ENCODE measurements at regions of chr1 and their contacts with region 1.

Region 1: DNA sequence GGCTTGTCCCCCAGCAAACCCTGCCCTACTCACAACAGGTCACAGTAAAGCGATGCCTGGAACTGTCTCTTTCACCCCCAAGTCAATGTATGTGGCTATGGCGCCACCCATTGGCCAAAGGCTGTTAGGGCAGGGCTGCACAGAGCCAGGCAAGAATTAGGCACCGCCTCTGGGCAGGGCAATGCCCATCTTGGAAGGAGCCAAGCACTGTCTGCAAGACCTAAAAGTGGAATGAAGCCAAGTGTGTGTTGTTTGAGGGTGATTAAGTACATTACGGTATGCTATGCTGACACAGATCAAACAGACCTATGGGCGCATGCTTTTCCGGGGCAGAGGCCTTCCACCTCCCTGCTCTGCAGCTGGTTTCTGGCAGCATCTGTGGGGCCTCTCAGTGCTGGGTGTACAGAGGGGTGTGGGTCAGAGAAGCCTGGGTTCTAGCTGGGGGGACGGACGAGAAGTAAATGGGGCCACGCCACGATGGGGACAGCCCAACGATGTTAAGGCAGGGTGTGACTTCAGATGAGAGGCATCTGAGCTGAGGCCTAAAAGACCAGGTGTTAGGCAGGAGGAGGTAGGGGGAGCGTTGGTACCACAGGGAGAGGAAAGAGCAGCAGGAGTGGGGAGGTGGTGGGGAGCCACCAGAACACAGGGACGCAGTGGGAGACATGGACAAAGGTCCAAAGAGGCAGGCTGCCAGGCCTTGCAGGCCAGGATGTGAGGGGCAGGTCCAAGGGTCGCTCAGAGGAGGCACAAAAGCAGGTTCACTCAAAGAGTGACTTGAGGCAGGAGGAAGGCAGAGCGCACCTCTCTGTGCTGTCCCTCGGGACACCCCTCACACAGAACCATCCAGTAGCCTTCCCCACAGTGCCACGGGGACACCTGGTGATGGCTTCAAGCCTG is 49.8 kb downstream of the ACOT7 start:
- DNase-seq: peak; percentile 28 to 81 (median 64)

Region 2: DNA sequence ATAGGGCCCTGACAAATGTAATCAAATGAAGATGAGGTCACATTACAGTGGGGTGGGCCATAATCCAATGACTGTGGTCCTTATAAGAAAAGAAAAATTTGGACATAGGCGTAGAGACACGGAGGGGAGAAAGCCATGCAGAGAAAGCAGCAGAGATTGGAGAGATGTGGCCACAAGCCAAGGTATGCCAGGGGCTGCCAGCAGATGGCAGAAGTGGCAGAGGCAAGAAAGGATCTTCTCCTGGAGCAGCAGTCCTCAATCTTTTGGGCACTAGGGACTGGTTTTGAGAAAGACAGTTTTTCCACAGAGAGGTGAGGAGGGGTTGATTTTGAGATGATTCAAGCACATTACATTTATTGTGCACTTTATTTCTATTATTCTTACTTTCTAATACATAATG is 706.6 kb before region 1 on chr1:
- intact Hi-C with region 1: no loop called
- DNase-seq: peak in 31 of 42 donors; percentile 17 to 80 (median 47)

Region 3: GRCh38 chr1:6280761-6281451 is 62.9 kb before region 1 on chr1:
- intact Hi-C with region 1: no loop called
- DNase-seq: no peak

Region 4: DNA sequence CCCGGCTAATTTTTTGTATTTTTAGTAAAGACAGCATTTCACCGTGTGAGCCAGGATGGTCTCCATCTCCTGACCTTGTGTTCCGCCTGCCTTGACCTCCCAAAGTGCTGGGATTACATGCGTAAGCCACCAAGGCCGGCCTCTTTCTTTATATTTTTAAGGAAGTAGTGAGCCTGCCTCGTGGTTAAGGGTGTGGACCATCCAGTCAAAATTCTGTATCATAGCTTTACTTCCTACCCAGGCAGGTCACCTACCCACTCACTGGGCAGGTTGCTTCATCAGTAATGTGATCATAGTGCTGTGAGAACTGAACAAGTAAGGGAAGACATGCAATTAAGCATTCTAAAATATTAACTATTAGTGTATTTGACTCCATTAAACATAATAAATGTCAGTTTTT is 57.9 kb after region 1 on chr1:
- intact Hi-C with region 1: loop called (anchors 10 kb)
- DNase-seq: no peak

Region 5: DNA sequence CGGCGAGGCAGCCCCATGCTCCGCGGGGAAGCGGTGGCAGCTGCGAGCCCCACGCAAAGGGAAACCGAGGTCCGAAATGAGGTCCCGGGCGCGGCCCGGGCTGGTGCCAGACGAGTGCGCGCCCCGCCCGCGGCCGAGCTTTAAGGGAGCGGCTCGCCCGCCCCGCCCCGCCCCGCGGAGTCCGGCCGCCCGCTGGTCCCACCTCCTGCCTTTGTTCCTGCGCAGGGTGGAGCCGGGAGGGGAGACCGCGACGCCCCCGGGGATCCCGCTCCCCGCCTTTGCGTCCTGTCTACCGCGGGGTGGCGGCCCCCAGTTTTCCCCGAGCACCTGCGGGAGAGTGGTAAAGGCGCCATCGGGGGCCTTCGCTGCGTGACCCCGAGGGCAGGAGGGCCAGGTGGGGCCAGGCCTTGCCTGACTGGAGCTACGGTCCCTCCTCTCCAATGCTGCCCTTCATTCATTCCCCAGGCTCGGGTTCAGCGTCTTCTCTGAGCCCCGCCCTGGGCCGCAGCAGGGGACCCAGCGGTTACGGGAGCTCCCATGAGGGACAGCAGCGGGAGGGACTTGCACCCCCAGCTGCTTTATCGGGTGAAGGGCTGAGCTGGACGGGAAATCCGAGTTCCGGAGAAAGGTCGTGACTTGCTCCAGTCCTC is 76.2 kb after region 1 on chr1 and contains the start of gene HES2:
- intact Hi-C with region 1: no loop called
- DNase-seq: no peak

Measured in head of caudate nucleus (tissue), 42 donors.